Caco-2 (cell line): ENCODE measurements at regions of chr3 and their contacts with region 1.

Region 1: DNA sequence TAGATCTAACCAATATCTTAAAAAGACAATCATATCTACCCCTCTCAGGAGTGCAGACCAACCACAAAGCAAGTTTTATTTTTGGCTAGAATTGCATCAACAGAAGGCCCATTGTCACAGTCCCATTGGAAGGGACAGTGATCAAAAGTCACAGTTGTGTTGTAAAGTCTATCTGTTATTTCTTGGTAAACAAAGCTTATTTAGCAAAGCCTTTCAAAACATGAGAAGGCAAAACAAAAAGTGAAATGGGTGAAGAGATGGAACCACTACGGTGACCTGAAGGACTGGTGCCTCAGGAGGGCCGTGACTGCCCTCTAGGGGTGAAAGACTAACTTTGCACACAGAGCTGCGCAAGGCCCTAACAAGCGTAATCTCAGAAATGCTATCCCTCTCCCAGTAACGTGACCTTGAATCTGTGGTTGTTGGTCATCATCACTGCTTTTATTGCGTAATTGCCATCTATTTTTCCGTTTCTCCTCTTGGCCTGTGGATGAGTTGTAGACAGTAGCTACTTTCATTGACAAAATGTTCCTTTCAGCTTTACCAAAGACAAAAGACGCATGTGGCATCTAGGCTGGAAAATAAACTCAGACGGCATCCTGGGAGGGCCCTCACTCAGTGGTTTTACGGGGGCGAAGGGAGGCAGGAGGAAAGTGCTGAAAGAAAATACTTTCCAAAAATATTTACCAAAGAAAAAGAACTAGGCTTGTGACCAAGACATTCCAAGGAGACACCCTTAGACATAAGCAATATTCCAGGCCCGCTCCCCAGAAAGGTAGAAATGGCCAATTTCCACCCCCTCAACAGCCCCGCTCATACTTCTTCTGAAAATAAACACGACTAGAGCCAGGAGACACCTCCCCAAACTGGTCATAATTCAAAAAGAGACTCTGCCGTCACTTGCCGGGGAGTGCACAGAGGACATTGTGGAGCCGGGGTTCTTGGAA is 79.4 kb downstream of the FRMD4B start:
- DNase-seq: peak; percentile 66 to 77
- H3K4me3 ChIP-seq: no peak overlapping the region
- H3K4me3 Mint-ChIP-seq: no peak overlapping the region
- H3K27ac Mint-ChIP-seq: no peak overlapping the region
- H3K4me1 ChIP-seq: peaks cover 25% of the 10 kb centered on the region
- H3K4me1 Mint-ChIP-seq: peaks cover 11% of the 10 kb centered on the region
- H3K27me3 ChIP-seq: no peaks in the 10 kb centered on the region
- H3K27me3 Mint-ChIP-seq: no peaks in the 10 kb centered on the region
- CTCF ChIP-seq: peak; percentile 85 to 87

Region 2: GRCh38 chr3:69120879-69121464 is 185.5 kb before region 1 on chr3:
- CTCF ChIA-PET with region 1: interaction called, 5 read pairs
- POLR2A ChIA-PET with region 1: no interaction called
- intact Hi-C with region 1: loop called (anchors 1 kb)
- DNase-seq: peak; percentile 81 to 84
- H3K4me3 ChIP-seq: no peak overlapping the region
- H3K4me3 Mint-ChIP-seq: no peak overlapping the region
- H3K27ac Mint-ChIP-seq: no peak overlapping the region
- H3K4me1 ChIP-seq: peaks cover 8% of the 10 kb centered on the region; the same call in 1 of the 2 replicates
- H3K4me1 Mint-ChIP-seq: no peaks in the 10 kb centered on the region
- H3K27me3 ChIP-seq: no peaks in the 10 kb centered on the region
- H3K27me3 Mint-ChIP-seq: no peaks in the 10 kb centered on the region
- CTCF ChIP-seq: peak; percentile 86 to 92

Region 3: GRCh38 chr3:69240651-69241568 is 65.6 kb before region 1 on chr3:
- CTCF ChIA-PET with region 1: interaction called, 7 read pairs
- POLR2A ChIA-PET with region 1: no interaction called
- intact Hi-C with region 1: loop called (anchors 2 kb)
- DNase-seq: peak; percentile 67 to 73
- H3K4me3 ChIP-seq: no peak overlapping the region
- H3K4me3 Mint-ChIP-seq: peak overlapping the region; percentile 60
- H3K27ac Mint-ChIP-seq: peak overlapping the region; percentile 96
- H3K4me1 ChIP-seq: peaks cover 89% of the 10 kb centered on the region
- H3K4me1 Mint-ChIP-seq: peaks cover 23% of the 10 kb centered on the region
- H3K27me3 ChIP-seq: no peaks in the 10 kb centered on the region
- H3K27me3 Mint-ChIP-seq: no peaks in the 10 kb centered on the region
- CTCF ChIP-seq: no peak

Region 4: DNA sequence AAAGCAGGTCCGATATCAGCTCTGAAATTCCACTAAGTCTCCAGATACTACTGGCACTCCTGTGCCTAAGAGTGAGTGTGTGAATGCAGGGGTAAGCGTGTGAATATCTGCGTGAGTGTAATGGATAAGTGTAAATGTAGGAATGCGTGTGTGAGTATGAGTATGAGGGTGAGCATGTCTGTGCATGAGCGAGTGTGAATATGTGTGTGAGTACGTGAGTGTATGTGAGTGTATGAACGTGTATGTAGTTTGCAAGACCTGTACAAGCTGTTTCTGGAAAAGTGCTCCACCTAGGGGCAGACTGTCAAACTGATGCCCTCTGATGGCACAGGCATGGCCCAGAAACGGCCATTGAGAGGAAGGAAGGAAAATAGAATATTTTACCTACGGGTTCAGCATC is 103.7 kb after region 1 on chr3:
- CTCF ChIA-PET with region 1: interaction called, 8 read pairs
- POLR2A ChIA-PET with region 1: no interaction called
- intact Hi-C with region 1: loop called (anchors 1 kb)
- DNase-seq: peak; percentile 71 to 76
- H3K4me3 ChIP-seq: no peak overlapping the region
- H3K4me3 Mint-ChIP-seq: peak overlapping the region; percentile 8
- H3K27ac Mint-ChIP-seq: no peak overlapping the region
- H3K4me1 ChIP-seq: no peaks in the 10 kb centered on the region
- H3K4me1 Mint-ChIP-seq: no peaks in the 10 kb centered on the region
- H3K27me3 ChIP-seq: no peaks in the 10 kb centered on the region
- H3K27me3 Mint-ChIP-seq: no peaks in the 10 kb centered on the region
- CTCF ChIP-seq: peak; percentile 72 to 88